ENCODE measurements at regions of chr9 and their contacts with region 1.

Region 1: GRCh38 chr9:69155341-69156030 is 18.6 kb upstream of the TJP2 start:
- DNase-seq: no peak
- H3K4me3 ChIP-seq: no peak overlapping the region
- H3K27ac ChIP-seq: no peak overlapping the region
- H3K4me1 ChIP-seq: peaks cover 1% of the 10 kb centered on the region
- H3K27me3 ChIP-seq: no peaks in the 10 kb centered on the region
- CTCF ChIP-seq: no peak
- POLR2A ChIP-seq: no peak

Region 2: DNA sequence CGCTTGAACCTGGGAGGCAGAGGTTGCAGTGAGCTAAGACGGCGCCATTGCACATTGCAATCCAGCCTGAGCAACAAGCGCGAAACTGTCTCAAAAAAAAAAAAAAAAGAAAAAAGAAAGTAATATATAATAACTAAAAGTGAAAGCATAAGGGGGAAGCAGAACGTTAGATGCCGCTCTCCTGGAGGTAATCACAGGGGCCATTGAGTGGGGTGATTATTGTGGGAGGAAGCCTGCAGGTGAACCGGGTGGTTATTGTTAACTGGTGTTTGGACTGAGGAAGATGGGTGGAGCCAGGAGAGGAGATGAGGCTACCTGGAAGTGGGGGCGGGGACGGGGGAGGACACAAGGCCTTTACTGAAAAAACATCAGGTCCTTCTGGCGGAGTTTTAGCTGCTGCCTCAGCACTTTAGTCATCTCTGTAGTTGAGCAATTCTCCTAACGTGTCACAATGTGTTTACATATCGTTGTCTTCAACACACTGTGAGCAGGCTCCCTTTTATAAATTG is 13.3 kb after region 1 on chr9:
- CTCF ChIA-PET with region 1: interaction called, 38 read pairs
- POLR2A ChIA-PET with region 1: interaction called, 8 read pairs
- dilution Hi-C with region 1: no loop called
- intact Hi-C with region 1: no loop called
- DNase-seq: no peak
- H3K4me3 ChIP-seq: no peak overlapping the region
- H3K27ac ChIP-seq: no peak overlapping the region
- H3K4me1 ChIP-seq: peaks cover 35% of the 10 kb centered on the region
- H3K27me3 ChIP-seq: no peaks in the 10 kb centered on the region
- CTCF ChIP-seq: no peak
- POLR2A ChIP-seq: no peak

Region 3: GRCh38 chr9:69180670-69181069 is 25.2 kb after region 1 on chr9:
- CTCF ChIA-PET with region 1: interaction called, 38 read pairs
- POLR2A ChIA-PET with region 1: interaction called, 3 read pairs
- dilution Hi-C with region 1: no loop called
- intact Hi-C with region 1: no loop called
- DNase-seq: peak; percentile 98
- H3K4me3 ChIP-seq: peak overlapping the region in 1 of 3 experiments; percentile 36
- H3K27ac ChIP-seq: peak overlapping the region; percentile 98
- H3K4me1 ChIP-seq: peaks cover 51% of the 10 kb centered on the region
- H3K27me3 ChIP-seq: no peaks in the 10 kb centered on the region
- CTCF ChIP-seq: no peak
- POLR2A ChIP-seq: no peak

Region 4: DNA sequence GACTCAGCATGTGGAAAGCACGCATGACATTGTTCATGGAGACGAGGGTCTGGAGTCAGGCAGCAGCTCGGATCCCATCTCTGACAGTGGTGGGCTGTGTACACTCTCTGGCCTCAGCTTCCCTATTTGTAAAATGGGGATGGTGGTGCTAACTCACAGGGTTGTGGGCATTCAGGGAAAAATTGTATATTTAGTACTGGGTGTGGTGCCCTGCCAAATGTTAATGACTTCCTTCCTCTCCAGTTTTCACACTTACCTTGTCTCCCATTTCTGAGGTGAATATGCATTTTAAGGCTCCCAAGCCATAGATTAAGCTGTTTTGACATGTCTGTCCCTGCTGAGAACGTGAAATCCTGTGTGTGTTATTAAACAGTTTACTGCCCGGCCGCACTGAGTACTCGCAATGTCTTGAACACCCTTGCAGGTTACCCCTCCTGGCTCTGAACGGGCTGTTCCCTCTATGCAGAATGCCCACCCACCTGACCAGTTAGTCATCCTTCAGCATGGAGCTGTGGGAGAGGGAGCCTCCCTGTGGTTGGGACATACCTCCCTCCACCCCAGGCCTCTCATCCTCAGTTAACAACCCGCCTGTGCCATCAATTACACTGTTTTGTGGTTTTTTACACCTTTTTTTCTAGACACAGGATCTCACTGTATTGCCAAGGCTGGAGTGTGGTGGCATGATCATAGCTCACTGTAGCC is 44.4 kb after region 1 on chr9:
- CTCF ChIA-PET with region 1: interaction called, 108 read pairs
- POLR2A ChIA-PET with region 1: no interaction called
- dilution Hi-C with region 1: loop called (anchors 10 kb)
- intact Hi-C with region 1: no loop called
- DNase-seq: no peak
- H3K4me3 ChIP-seq: no peak overlapping the region
- H3K27ac ChIP-seq: no peak overlapping the region
- H3K4me1 ChIP-seq: no peaks in the 10 kb centered on the region
- H3K27me3 ChIP-seq: no peaks in the 10 kb centered on the region
- CTCF ChIP-seq: no peak
- POLR2A ChIP-seq: no peak